ENCODE measurements at regions of chr11 and their contacts with region 1.

Region 1: DNA sequence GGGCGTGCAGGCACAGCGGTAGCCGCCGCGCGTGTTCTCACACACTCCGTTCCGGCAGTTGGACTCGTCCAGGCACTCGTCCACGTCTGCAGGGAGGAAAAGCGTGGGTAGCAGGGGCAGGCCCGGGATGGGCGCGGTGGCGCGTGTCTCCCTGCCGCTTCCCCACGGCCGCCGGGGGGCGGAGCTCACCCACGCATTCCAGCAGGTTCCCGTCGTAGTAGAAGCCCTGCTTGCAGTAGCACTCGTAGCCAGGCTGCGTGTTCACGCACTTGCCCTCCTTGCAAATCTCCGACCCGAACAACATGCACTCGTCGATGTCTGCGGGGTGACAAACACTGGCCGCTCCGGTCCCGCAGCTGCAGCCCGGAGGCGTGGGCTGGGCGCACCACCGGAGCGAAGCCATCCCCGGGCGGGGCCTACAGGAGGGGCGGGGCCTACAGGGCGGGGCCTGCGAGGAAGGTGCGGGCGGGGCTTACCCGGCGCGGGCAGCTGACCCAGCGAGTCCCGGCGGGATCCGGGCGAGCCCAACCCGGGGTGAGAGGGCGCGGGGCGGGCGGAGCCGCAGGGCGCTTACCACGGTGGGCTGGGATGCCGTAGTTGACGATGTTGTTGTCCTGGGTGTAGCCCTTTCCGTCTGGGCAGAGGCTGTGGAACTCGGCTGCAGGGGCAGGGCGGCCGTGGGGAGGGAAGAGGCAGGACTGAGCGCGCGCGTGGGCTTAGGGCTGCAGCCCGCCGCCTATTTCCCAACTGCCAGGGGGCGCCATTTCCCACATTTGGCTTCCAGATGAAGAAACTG is 15.6 kb downstream of the SCYL1 start:
- DNase-seq: peak; percentile 90 to 95 (median 93)
- ATAC-seq: peak; percentile 84 to 93 (median 91)
- H3K4me3 ChIP-seq: peak overlapping the region; percentile 11 to 66 (median 52)
- H3K27ac ChIP-seq: peak overlapping the region; percentile 66 to 95 (median 88)
- H3K4me1 ChIP-seq: peaks cover 0 to 28% (median 20%) of the 10 kb centered on the region in 12 donors
- H3K27me3 ChIP-seq: no peaks in the 10 kb centered on the region
- CTCF ChIP-seq: peak; percentile 79 to 95 (median 88)
- POLR2A ChIP-seq: peak in 1 of 2 donors; percentile 49

Region 2: GRCh38 chr11:65558002-65558931 is 17.8 kb after region 1 on chr11 and contains the start of gene LTBP3:
- intact Hi-C with region 1: loop called in 2 of 10 experiments (anchors 1 to 2 kb)
- DNase-seq: peak; percentile 84 to 92 (median 87)
- ATAC-seq: peak; percentile 52 to 86 (median 78)
- H3K4me3 ChIP-seq: peak within 1 kb of the TSS; percentile 49 to 85 (median 67)
- H3K27ac ChIP-seq: peak within 1 kb of the TSS; percentile 86 to 99 (median 96)
- H3K4me1 ChIP-seq: peaks cover 6 to 78% (median 62%) of the 10 kb centered on the region in 12 donors
- H3K27me3 ChIP-seq: no peaks in the 10 kb centered on the region
- CTCF ChIP-seq: peak in 2 of 12 donors; percentile 6 to 17
- POLR2A ChIP-seq: peak in 1 of 2 donors; percentile 19
- total RNA-seq, gene LTBP3: 51.4 to 125 (median 88.9) TPM

Region 3: GRCh38 chr11:65575568-65576231 is 35.2 kb after region 1 on chr11 and contains the start of gene EHBP1L1:
- intact Hi-C with region 1: loop called in 6 of 10 experiments (anchors 1 to 5 kb)
- DNase-seq: peak; percentile 81 to 92 (median 84)
- ATAC-seq: peak in 3 of 4 donors; percentile 1 to 32 (median 12)
- H3K4me3 ChIP-seq: peak within 1 kb of the TSS; percentile 28 to 96 (median 79)
- H3K27ac ChIP-seq: peak within 1 kb of the TSS; percentile 89 to 99 (median 96)
- H3K4me1 ChIP-seq: peaks cover 17 to 77% (median 63%) of the 10 kb centered on the region in 12 donors
- H3K27me3 ChIP-seq: no peaks in the 10 kb centered on the region
- CTCF ChIP-seq: no peak
- POLR2A ChIP-seq: peak in 1 of 2 donors; percentile 38
- total RNA-seq, gene EHBP1L1: 37.4 to 144 (median 80.9) TPM

Region 4: DNA sequence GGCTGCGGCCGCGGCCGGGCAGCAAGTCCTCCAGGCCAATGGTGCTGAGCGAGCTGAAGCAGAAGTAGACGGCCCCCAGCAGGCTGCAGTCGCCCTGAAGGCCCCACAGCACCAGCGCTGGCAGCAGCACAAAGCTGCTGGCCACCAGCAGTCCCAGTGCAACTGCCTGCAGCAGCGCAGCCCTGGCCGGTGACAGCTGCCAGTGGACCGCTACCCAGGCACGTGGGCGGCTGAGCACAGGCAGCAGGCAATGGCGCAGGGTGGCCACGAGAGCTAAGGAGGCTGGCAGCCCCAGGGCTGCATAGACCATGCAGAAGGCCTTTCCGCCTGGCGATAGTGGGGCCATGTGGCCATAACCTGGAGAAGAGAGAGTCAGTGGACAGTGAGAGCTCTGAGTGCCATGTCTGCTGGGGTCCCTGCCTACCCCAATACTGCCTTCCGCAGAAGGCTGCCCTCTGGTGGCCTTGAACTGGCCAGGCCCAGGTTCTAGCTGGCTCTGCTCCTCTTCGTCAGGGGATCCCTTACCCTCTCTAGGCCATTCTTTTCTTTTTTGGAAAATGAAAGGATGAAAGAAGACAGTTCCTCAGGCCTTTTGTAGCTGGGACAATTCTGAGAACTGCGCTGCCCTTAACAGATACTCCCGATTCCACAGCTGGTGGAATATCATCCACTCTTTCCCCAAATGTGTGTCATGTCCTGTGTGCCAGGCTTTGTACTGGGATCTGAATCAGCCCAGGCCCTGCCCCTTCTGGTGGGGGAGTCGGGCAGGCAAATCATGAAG is 53.2 kb after region 1 on chr11:
- intact Hi-C with region 1: loop called in 8 of 10 experiments (anchors 2 to 10 kb)
- DNase-seq: peak in 2 of 5 donors; percentile 63 to 71
- ATAC-seq: peak in 3 of 4 donors; percentile 23 to 47 (median 45)
- H3K4me3 ChIP-seq: no peak overlapping the region
- H3K27ac ChIP-seq: peak overlapping the region in 5 of 12 donors; percentile 3 to 54 (median 20)
- H3K4me1 ChIP-seq: peaks cover 0 to 51% (median 33%) of the 10 kb centered on the region in 12 donors
- H3K27me3 ChIP-seq: no peaks in the 10 kb centered on the region
- CTCF ChIP-seq: peak; percentile 56 to 76 (median 66)
- POLR2A ChIP-seq: no peak

Region 5: GRCh38 chr11:65817835-65818742 is 277.6 kb after region 1 on chr11:
- intact Hi-C with region 1: loop called in 1 of 10 experiments (anchors 5 kb)
- DNase-seq: peak; percentile 92 to 97 (median 94)
- ATAC-seq: peak; percentile 62 to 98 (median 96)
- H3K4me3 ChIP-seq: peak overlapping the region; percentile 31 to 83 (median 67)
- H3K27ac ChIP-seq: peak overlapping the region in 11 of 12 donors; percentile 33 to 86 (median 62)
- H3K4me1 ChIP-seq: peaks cover 0 to 25% (median 5%) of the 10 kb centered on the region in 12 donors
- H3K27me3 ChIP-seq: no peaks in the 10 kb centered on the region
- CTCF ChIP-seq: peak in 11 of 12 donors; percentile 98 to 100 (median 100)
- POLR2A ChIP-seq: no peak